ENCODE measurements at regions of chr6 and their contacts with region 1.

Region 1: DNA sequence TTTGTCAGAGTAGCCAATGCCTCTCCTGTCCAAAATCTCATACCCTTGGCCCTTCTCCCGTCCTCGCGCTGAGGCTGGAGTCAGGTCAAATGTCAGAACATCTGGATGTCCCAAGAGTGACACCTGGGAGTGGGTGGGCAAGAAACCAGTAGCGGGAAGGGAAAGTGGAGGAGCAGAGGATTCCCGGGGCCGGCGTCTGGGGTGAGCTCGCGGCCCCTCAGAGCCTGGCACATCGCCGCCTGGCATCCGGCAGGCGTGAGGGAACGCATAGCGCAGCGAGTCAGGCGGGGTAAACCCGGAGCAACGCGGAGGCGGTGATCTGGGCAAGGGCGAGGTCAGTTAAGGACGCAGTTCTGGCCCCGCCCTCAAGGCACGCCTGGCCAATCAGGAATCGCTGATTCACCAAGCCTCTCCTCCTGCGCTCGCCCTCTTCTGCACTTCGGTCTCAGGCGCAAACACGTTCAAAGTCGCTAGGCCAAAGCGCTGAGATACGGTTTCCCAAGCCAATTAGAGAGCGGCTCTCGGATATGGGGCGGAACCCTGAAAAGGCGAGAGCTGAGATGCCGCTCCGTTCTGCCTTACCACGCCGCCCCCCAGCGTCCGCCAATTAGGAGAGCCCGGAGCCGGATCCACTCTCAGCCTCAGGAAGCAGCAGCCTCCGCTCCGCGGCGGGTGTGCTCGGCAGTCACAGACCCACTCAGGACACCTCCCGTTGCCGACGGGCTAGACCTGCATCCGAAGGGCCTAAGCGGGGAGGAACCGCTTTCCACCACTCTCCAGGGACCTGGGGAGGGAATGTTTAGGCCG is 22.5 kb downstream of the VPS52 start:
- DNase-seq: peak; percentile 94 to 98 (median 97)
- H3K4me3 ChIP-seq: peak overlapping the region; percentile 60 to 65
- H3K4me3 Mint-ChIP-seq: peak overlapping the region; percentile 84 to 95 (median 88)
- H3K27ac ChIP-seq: peak overlapping the region; percentile 93
- H3K27ac Mint-ChIP-seq: peak overlapping the region; percentile 90 to 98 (median 97)
- H3K4me1 ChIP-seq: peaks cover 26% of the 10 kb centered on the region
- H3K4me1 Mint-ChIP-seq: peaks cover 19 to 47% (median 30%) of the 10 kb centered on the region in 4 donors
- H3K27me3 ChIP-seq: no peaks in the 10 kb centered on the region
- H3K27me3 Mint-ChIP-seq: peaks cover 0 to 3% of the 10 kb centered on the region in 2 donors

Region 2: DNA sequence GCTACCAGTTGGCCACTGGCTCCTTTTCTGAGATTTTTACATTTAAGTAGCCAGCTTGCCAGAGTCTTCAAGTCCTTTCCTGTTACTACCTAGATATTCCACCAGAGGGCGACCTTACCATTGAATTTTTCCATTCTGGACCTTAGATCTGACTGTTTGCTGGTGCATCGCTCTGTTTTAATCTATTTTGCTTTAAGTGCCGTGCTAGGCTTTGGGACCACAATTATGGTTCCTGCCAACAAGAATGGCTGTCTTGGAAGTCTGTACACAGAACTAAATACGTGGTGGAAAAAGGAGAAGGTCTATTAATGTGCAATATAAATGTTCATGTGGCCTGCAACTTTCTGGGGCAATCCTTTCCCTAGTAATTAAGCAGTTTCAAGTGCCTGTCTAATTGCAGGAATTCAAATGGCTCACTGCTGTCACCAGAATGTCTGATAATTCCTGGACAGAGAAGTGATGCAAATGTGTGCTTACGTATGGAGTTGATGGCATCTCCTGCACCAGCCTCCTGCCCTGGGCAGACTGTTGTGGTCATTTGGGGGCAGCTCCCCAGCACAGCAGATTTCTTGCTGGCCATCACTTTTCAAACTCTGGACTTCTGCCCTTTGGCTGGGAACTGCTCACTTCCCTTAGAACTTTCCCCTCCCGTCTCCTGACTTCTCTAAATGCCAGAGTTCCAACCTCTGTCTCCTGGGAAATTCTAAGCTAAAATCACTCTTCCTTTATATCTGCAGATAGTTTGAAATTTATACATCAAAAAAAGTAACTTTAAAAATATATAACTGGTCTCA is 234.1 kb before region 1 on chr6:
- CTCF ChIA-PET with region 1: interaction called, 12 read pairs
- POLR2A ChIA-PET with region 1: interaction called, 10 read pairs
- intact Hi-C with region 1: loop called (anchors 1 kb)
- DNase-seq: peak; percentile 66 to 79 (median 73)
- H3K4me3 ChIP-seq: no peak overlapping the region
- H3K4me3 Mint-ChIP-seq: no peak overlapping the region
- H3K27ac ChIP-seq: no peak overlapping the region
- H3K27ac Mint-ChIP-seq: no peak overlapping the region
- H3K4me1 ChIP-seq: peaks cover 24% of the 10 kb centered on the region
- H3K4me1 Mint-ChIP-seq: peaks cover 0 to 20% (median 20%) of the 10 kb centered on the region in 4 donors
- H3K27me3 ChIP-seq: peaks cover 11% of the 10 kb centered on the region
- H3K27me3 Mint-ChIP-seq: peaks cover 8 to 11% of the 10 kb centered on the region in 2 donors

Region 3: GRCh38 chr6:33147807-33148666 is 101.1 kb before region 1 on chr6:
- CTCF ChIA-PET with region 1: interaction called, 17 read pairs
- POLR2A ChIA-PET with region 1: no interaction called
- intact Hi-C with region 1: no loop called
- DNase-seq: peak in 2 of 5 donors; percentile 11 to 29
- H3K4me3 ChIP-seq: no peak overlapping the region
- H3K4me3 Mint-ChIP-seq: no peak overlapping the region
- H3K27ac ChIP-seq: no peak overlapping the region
- H3K27ac Mint-ChIP-seq: no peak overlapping the region
- H3K4me1 ChIP-seq: no peaks in the 10 kb centered on the region
- H3K4me1 Mint-ChIP-seq: peaks cover 0 to 2% (median 0%) of the 10 kb centered on the region in 4 donors
- H3K27me3 ChIP-seq: no peaks in the 10 kb centered on the region
- H3K27me3 Mint-ChIP-seq: peaks cover 21 to 26% of the 10 kb centered on the region in 2 donors

Region 4: GRCh38 chr6:33208091-33208967 is 40.8 kb before region 1 on chr6 and contains the start of gene RING1:
- CTCF ChIA-PET with region 1: interaction called, 20 read pairs
- POLR2A ChIA-PET with region 1: interaction called, 51 read pairs
- intact Hi-C with region 1: loop called (anchors 1 kb)
- DNase-seq: peak; percentile 87 to 90 (median 87)
- H3K4me3 ChIP-seq: peak within 1 kb of the TSS; percentile 75 to 78
- H3K4me3 Mint-ChIP-seq: peak within 1 kb of the TSS; percentile 88 to 97 (median 92)
- H3K27ac ChIP-seq: peak within 1 kb of the TSS; percentile 85
- H3K27ac Mint-ChIP-seq: peak within 1 kb of the TSS; percentile 88 to 96 (median 95)
- H3K4me1 ChIP-seq: peaks cover 44% of the 10 kb centered on the region
- H3K4me1 Mint-ChIP-seq: peaks cover 32 to 61% (median 43%) of the 10 kb centered on the region in 4 donors
- H3K27me3 ChIP-seq: no peaks in the 10 kb centered on the region
- H3K27me3 Mint-ChIP-seq: peaks cover 3 to 12% of the 10 kb centered on the region in 2 donors
- total RNA-seq, gene RING1: 36.8 to 38.4 TPM

Region 5: GRCh38 chr6:33276864-33277662 is 27.9 kb after region 1 on chr6 and contains the start of gene B3GALT4:
- CTCF ChIA-PET with region 1: interaction called, 35 read pairs
- POLR2A ChIA-PET with region 1: interaction called, 92 read pairs
- intact Hi-C with region 1: loop called (anchors 1 kb)
- DNase-seq: peak; percentile 66 to 77 (median 75)
- H3K4me3 ChIP-seq: peak within 1 kb of the TSS; percentile 72 to 79
- H3K4me3 Mint-ChIP-seq: peak within 1 kb of the TSS; percentile 89 to 93 (median 91)
- H3K27ac ChIP-seq: peak within 1 kb of the TSS; percentile 82
- H3K27ac Mint-ChIP-seq: peak within 1 kb of the TSS; percentile 90 to 97 (median 94)
- H3K4me1 ChIP-seq: peaks cover 71% of the 10 kb centered on the region
- H3K4me1 Mint-ChIP-seq: peaks cover 35 to 87% (median 59%) of the 10 kb centered on the region in 4 donors
- H3K27me3 ChIP-seq: no peaks in the 10 kb centered on the region
- H3K27me3 Mint-ChIP-seq: no peaks in the 10 kb centered on the region
- total RNA-seq, gene B3GALT4: 43.3 to 46.7 TPM

Region 6: DNA sequence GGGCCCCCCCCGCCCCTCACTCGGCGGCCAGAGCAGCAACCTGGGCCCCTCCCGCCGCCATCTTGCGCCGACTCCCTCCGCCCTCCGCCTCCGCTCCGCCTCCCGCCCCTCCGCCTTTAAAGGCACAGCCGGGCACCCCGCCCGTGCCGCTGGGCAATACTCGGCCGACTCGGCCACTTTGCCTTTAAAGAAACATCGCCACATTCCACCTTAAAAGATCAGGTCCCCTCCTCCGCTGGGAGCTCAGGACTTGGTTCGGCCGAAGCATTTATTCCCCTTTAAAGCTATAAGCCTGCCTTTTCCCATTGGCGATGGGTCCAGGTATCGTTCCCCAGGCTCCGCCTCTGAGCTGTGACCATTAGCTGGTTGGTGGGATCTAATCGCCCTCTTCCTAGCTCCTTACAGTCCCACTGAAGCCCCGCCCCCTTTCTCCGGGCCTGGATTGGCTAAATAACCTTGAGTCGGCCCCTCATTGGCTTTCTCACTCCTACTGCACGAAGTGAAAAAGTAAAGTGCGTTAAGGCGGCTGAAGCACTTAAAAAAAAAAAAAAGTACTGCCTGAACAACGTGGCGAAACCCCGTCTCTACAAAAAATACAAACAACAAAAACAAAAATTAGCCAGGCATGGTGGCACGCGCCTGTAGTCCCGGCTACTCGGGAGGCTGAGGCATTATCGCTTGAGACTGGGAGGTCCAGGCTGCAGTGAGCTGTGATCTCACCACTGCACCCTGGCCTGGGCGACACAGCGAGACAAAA is 68.7 kb after region 1 on chr6 and contains the start of gene ZBTB22:
- CTCF ChIA-PET with region 1: no interaction called
- POLR2A ChIA-PET with region 1: interaction called, 17 read pairs
- intact Hi-C with region 1: no loop called
- DNase-seq: peak; percentile 96 to 99 (median 97)
- H3K4me3 ChIP-seq: peak within 1 kb of the TSS; percentile 73 to 100
- H3K4me3 Mint-ChIP-seq: peak within 1 kb of the TSS; percentile 98 to 100 (median 99)
- H3K27ac ChIP-seq: peak within 1 kb of the TSS; percentile 83
- H3K27ac Mint-ChIP-seq: peak within 1 kb of the TSS; percentile 98 to 99 (median 98)
- H3K4me1 ChIP-seq: peaks cover 73% of the 10 kb centered on the region
- H3K4me1 Mint-ChIP-seq: peaks cover 40 to 100% (median 62%) of the 10 kb centered on the region in 4 donors
- H3K27me3 ChIP-seq: no peaks in the 10 kb centered on the region
- H3K27me3 Mint-ChIP-seq: no peaks in the 10 kb centered on the region
- total RNA-seq, gene ZBTB22: 28.6 to 28.7 TPM

Region 7: DNA sequence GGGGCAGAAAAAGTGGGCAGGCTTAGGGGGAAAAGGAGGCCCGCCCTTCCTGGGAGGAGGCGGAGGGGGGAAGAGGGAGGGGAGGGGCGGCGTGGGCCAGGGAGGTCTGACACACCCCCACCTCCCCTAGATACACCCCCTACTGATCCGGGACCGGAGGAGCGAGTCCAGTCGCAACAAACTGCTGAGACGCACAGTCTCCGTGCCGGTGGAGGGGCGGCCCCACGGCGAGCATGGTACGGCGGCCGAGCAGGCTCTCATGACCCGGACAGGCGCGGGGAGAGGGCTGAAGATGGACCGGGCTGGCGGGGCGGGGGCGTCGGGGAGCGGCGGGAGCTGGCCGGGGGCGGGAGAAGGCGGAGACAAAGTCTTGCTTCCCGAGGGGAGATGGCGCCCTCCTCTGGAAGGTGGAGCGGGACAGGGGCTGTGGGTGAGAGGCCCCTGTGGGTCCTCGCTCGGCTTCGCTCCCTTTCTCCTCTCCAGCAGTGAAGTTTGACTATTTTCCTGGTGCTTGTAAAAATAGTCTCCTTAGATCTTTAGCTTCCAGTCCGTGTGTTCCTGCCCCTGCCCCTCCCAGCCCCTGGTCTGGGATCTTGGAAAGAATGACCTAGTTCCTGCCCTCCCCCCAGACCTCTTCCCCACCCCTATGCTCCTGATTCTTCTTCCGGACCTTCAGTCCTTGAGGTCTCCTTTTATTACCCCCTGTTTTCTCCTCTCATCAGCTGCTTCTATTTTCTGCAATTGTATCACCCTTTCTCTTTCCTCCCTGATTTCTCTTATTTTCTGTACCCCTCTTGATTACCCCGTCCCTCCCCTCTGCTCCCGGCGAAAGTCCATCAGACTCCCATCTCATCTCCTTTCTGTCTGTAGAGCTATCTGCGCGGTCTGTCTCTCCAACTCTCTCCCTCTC is 176.8 kb after region 1 on chr6:
- CTCF ChIA-PET with region 1: no interaction called
- POLR2A ChIA-PET with region 1: interaction called, 15 read pairs
- intact Hi-C with region 1: no loop called
- DNase-seq: peak; percentile 80 to 87 (median 80)
- H3K4me3 ChIP-seq: peak overlapping the region; percentile 59 to 63
- H3K4me3 Mint-ChIP-seq: peak overlapping the region; percentile 84 to 99 (median 94)
- H3K27ac ChIP-seq: peak overlapping the region; percentile 90
- H3K27ac Mint-ChIP-seq: peak overlapping the region; percentile 96 to 100 (median 98)
- H3K4me1 ChIP-seq: peaks cover 61% of the 10 kb centered on the region
- H3K4me1 Mint-ChIP-seq: peaks cover 62 to 96% (median 68%) of the 10 kb centered on the region in 4 donors
- H3K27me3 ChIP-seq: no peaks in the 10 kb centered on the region
- H3K27me3 Mint-ChIP-seq: no peaks in the 10 kb centered on the region

Measured in CD4-positive, alpha-beta memory T cell (primary cell).